Transverse colon (tissue), 4 donors: ENCODE measurements at regions of chr7 and their contacts with region 1.

Region 1: DNA sequence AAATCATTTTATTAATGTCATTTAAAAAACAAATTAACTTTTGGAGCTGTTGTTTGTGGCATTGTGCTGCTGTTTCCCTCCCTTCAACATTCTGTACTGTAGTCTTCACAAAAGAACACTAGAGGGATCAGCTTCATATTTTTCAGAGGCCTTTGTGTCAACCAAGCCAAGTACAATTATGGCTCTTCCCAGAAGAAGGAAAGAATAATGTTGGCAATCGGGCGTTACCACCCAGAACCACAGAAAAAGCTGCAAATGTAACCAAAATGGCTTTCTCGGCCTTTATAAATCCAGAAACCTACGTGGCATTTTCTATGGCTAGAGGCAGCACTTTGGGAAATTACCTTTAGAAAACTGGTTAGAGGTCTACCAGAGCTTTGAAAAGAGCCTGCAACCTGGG is 98.8 kb upstream of the COL1A2 start:
- DNase-seq: no peak
- H3K4me3 ChIP-seq: no peak overlapping the region
- H3K27ac ChIP-seq: peak overlapping the region; percentile 75 to 86 (median 79)
- H3K4me1 ChIP-seq: peaks cover 0 to 28% (median 10%) of the 10 kb centered on the region in 4 donors
- H3K27me3 ChIP-seq: no peaks in the 10 kb centered on the region
- CTCF ChIP-seq: peak; percentile 32 to 59 (median 41)
- EP300 ChIP-seq: no peak
- POLR2A ChIP-seq: no peak

Region 2: GRCh38 chr7:93715234-93715633 is 580.6 kb before region 1 on chr7:
- in situ Hi-C with region 1: no loop called
- intact Hi-C with region 1: no loop called
- DNase-seq: peak; percentile 18
- H3K4me3 ChIP-seq: no peak overlapping the region
- H3K27ac ChIP-seq: no peak overlapping the region
- H3K4me1 ChIP-seq: peaks cover 0 to 5% (median 0%) of the 10 kb centered on the region in 4 donors
- H3K27me3 ChIP-seq: no peaks in the 10 kb centered on the region
- CTCF ChIP-seq: peak in 4 of 5 experiments; percentile 18 to 35 (median 33)
- EP300 ChIP-seq: no peak
- POLR2A ChIP-seq: no peak

Region 3: DNA sequence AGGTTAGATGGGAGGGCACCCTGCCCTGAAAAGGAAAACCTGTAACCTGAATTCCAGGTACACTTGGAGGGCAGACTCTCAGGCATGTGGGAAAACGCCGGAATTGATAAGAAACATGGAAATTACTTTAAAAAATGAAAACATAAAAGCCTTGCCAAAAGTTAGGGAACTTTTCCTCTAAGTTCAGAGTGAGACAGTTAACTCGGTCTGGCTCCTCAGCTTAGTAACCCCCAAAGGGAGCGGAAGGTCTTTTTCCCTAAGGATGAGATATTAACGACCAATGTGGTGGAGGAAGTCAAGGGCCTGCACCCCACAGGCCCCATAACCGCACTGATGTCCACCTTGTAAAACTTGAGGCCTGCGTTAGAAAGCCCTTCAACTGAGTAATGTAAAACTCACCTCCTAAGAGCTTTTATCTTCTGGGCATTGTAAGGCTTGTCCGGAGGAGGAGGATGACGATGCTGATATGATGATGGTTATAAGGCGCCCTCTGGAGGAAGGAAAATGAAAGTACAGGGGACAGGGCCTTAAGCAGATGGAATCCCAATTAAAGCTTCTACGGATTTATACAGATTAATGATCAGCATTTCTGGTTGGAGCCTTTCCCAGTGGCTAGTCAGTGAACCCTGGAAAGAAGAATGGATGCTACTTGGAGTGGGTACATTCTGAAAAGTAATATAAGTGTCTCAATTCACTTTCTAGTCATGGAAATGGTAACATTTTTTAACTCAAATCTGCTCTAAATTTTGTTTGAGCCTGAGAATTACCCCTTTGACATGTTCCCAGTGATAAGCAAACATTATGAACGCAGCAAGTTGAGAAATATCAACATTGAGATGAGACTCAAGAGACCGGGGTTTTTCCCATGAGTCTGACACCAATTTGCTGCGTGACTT is 99.5 kb after region 1 on chr7:
- in situ Hi-C with region 1: loop called in 3 of 4 experiments (anchors 10 kb)
- intact Hi-C with region 1: loop called (anchors 1 kb)
- DNase-seq: peak; percentile 30
- H3K4me3 ChIP-seq: peak overlapping the region; percentile 30 to 59 (median 46)
- H3K27ac ChIP-seq: peak overlapping the region; percentile 88 to 90 (median 89)
- H3K4me1 ChIP-seq: peaks cover 0 to 29% (median 4%) of the 10 kb centered on the region in 4 donors
- H3K27me3 ChIP-seq: peaks cover 15% of the 10 kb centered on the region
- CTCF ChIP-seq: peak; percentile 64 to 79 (median 72)
- EP300 ChIP-seq: no peak
- POLR2A ChIP-seq: no peak

Region 4: DNA sequence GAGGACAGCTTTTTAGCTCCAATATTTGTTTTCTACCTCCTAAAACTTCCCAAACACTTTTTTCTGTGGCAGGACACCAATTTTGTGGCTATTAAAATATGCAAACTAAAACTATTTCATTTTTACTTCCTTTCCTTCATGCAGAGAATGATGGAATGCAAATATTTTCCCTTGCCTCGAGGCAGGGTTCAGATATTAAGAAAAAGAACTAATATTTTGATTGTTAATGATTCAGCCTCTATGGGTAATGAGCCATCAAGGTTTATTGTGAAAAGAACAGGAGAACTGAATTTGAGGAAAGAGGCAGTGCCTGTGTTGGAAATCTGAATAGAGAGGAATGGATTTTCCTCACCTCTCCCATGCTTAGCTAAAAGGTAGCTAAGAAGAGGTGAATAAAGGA is 170.7 kb after region 1 on chr7:
- in situ Hi-C with region 1: no loop called
- intact Hi-C with region 1: no loop called
- DNase-seq: no peak
- H3K4me3 ChIP-seq: no peak overlapping the region
- H3K27ac ChIP-seq: no peak overlapping the region
- H3K4me1 ChIP-seq: no peaks in the 10 kb centered on the region
- H3K27me3 ChIP-seq: no peaks in the 10 kb centered on the region
- CTCF ChIP-seq: no peak
- EP300 ChIP-seq: no peak
- POLR2A ChIP-seq: no peak

Region 5: DNA sequence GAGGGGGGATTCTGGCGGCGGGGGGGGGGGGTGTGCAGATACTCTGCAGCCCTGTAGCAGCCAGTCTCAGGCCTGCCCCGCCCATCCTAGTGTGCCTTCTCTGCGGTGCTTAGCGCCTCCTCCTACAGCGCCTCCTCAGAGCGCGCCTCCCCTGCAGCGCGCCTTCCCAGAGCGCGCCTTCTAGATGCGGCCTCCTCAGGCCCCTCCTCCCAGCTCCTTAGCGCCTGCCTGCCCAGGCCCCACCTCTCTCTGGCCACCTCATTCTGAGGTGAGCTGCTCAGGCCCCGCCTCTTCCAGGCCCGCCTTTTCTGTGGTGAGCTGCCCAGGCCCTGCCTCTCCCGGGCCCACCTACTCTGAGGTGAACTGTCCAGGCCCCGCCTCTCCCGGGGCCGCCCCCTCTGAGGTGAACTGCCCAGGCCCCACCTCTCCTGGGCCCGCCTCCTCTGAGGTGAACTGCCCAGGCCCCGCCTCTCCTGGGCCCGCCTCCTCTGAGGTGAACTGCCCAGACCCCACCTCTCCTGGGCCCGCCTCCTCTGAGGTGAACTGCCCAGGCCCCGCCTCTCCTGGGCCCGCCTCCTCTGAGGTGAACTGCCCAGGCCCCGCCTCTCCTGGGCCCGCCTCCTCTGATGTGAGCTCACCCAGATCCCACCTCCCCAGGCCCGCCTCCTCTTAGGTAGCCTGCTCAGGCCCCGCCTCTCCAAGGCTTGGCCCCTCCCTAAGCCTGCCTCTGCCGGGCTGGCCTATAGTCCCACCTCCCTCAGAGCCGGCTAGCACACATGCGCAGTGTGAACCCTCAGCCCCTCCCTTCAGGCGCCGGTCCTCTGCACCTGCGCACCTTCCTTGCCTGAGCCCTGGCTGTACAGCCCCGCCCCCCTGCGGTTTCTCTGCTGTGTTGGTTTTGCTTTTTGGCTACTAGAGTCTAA is 362.2 kb after region 1 on chr7:
- in situ Hi-C with region 1: no loop called
- intact Hi-C with region 1: loop called (anchors 5 kb)
- DNase-seq: peak; percentile 96
- H3K4me3 ChIP-seq: peak overlapping the region in 3 of 4 donors; percentile 12 to 66 (median 39)
- H3K27ac ChIP-seq: peak overlapping the region; percentile 42 to 77 (median 70)
- H3K4me1 ChIP-seq: peaks cover 0 to 35% (median 9%) of the 10 kb centered on the region in 4 donors
- H3K27me3 ChIP-seq: peaks cover 35% of the 10 kb centered on the region
- CTCF ChIP-seq: no peak
- EP300 ChIP-seq: no peak
- POLR2A ChIP-seq: no peak